Activated B cell treated with CpG ODN at 0.5 μM for 24 hours (primary cell): ENCODE measurements at regions of chr1 and their contacts with region 1.

Region 1: DNA sequence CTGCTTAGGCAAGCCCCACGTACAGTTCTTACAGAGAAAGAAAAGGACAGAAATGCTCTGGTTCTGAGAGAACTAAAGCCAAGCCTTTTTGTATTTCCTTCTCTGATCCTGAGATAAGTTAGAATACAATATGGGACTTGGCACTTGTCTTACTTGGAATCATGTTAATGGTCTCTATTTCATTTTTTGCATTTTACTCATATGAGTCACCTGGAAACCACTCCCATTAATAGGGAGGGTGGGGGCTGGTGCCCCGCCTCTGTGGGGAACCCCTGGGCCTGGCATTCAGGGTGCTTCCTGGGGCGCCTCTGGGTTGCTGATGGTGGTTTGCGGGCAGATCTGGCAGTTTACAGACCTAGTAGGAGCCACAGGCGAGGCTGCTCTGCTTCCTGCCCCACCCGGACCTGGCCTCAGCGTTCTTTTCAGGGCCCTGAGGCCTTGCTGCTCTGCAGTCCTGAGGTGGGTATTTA is 26.7 kb downstream of the TSPAN2 start:
- DNase-seq: peak; percentile 44
- ATAC-seq: peak; percentile 93
- H3K4me3 Mint-ChIP-seq: no peak overlapping the region
- H3K27ac Mint-ChIP-seq: peak overlapping the region; percentile 71
- H3K4me1 Mint-ChIP-seq: peaks cover 16% of the 10 kb centered on the region
- H3K27me3 Mint-ChIP-seq: no peaks in the 10 kb centered on the region
- CTCF ChIP-seq: no peak

Region 2: DNA sequence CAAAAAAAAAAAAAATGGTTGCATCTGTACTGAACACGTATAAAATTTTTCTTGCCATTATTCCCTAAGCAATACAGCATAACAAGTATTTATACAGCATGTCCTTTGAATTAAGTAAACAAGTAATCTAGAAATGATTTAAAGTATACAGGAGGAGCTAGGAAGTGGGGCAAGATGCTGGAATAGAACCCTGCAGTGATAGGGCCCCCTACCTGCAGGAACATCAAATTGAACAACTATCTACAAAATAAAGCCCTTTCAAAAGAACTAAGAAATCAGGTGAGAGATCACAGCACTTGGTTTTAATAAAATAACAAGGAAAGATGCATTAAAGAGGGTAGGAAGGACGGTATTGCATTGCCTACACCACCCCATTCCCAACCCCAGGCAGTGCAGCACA is 22.1 kb before region 1 on chr1:
- CTCF ChIA-PET with region 1: no interaction called
- POLR2A ChIA-PET with region 1: no interaction called
- intact Hi-C with region 1: no loop called
- DNase-seq: no peak
- ATAC-seq: no peak
- H3K4me3 Mint-ChIP-seq: no peak overlapping the region
- H3K27ac Mint-ChIP-seq: no peak overlapping the region
- H3K4me1 Mint-ChIP-seq: no peaks in the 10 kb centered on the region
- H3K27me3 Mint-ChIP-seq: no peaks in the 10 kb centered on the region
- CTCF ChIP-seq: no peak

Region 3: GRCh38 chr1:115089420-115090185 is 27.0 kb after region 1 on chr1 and contains the start of gene TSPAN2:
- CTCF ChIA-PET with region 1: no interaction called
- POLR2A ChIA-PET with region 1: no interaction called
- intact Hi-C with region 1: loop called (anchors 2 kb)
- DNase-seq: peak; percentile 44
- ATAC-seq: peak; percentile 87
- H3K4me3 Mint-ChIP-seq: peak within 1 kb of the TSS; percentile 86
- H3K27ac Mint-ChIP-seq: no peak within 1 kb of the TSS
- H3K4me1 Mint-ChIP-seq: peaks cover 11% of the 10 kb centered on the region
- H3K27me3 Mint-ChIP-seq: peaks cover 14% of the 10 kb centered on the region
- CTCF ChIP-seq: no peak
- total RNA-seq, gene TSPAN2: 0.91 TPM in 1 of 2 replicates, not detected in the other